Posterior vena cava (tissue), 2 donors: ENCODE measurements at regions of chr4 and their contacts with region 1.

Region 1: GRCh38 chr4:41776465-41776864 is 27.9 kb upstream of the PHOX2B start:
- DNase-seq: no peak

Region 2: DNA sequence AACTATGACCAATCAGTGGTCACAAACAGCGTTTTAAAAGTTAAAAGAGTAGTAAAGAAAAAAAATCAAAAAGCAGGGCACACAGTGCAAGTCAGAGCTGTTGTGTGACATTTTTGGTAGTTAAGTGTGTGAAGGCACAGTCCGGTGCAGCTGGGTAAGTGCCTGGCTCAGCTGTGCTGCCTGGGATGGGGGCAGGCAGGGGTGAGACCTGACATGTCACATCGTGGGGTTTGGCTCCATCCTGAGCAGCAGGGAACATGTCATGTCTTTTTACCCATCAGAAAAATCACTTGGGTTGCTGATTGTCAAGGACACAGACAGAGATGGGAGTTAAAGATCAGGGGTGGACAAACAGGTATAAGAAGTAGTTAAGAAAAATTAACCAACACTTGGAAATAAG is 901.6 kb before region 1 on chr4:
- intact Hi-C with region 1: loop called in 1 of 2 experiments (anchors 5 kb)
- DNase-seq: no peak

Region 3: DNA sequence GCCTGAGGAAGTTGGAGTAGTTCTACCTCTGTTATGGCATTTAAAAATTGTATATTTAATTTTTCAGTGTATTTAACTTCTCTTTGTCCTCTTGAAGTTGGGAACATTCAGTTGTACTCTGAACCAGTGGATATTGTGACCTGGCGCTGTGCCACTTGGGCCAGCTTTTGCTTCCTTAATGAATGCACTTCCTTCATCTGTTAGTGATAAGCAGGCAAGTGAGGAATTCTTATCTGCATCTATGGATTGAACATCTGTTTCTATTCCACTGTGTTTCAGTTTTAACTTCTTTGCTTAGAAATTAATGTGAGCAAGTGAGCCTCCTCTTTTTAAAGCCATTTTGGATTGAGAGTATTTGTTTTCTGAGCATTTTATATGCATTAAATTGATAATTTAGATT is 391.5 kb before region 1 on chr4:
- intact Hi-C with region 1: no loop called
- DNase-seq: peak; percentile 87